PC-3 (cell line): ENCODE measurements at regions of chr10 and their contacts with region 1.

Region 1: DNA sequence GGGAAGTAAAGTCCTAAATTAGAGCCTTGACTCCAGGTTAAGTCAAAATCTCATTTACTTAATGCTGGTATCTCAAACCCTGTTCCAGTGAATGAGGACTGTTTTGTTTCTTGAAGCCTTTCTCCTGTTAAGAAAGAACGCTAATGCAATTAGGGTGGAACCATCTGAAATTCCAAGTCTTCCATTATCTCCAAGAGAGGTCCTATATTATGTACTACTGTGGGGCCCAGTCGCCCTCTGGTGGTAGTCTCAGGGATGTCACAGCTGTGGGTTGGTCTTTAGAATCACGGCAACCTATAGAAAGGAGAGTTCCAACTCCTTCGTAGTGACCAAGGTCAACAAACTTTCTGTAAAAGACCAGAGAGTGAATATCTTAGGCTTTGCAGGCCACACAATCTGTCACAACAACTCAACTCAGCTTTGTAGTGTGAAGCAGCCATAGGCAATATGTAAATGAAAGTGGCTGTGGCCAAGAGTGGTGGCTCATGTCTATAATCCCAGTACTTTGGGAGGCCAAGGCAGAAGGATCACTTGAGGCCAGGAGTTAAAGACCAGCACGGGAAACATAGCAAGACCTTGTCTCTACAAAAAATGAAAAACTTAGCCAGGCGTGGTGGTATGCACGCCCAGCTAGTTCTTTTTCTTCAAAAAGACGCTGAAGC is 9.3 kb downstream of the RPP38 start:
- DNase-seq: peak; percentile 73
- ATAC-seq: peak; percentile 98
- H3K4me3 ChIP-seq: no peak overlapping the region
- H3K27ac ChIP-seq: no peak overlapping the region
- H3K4me1 ChIP-seq: no peaks in the 10 kb centered on the region
- H3K27me3 ChIP-seq: no peaks in the 10 kb centered on the region
- CTCF ChIP-seq: peak; percentile 75

Region 2: DNA sequence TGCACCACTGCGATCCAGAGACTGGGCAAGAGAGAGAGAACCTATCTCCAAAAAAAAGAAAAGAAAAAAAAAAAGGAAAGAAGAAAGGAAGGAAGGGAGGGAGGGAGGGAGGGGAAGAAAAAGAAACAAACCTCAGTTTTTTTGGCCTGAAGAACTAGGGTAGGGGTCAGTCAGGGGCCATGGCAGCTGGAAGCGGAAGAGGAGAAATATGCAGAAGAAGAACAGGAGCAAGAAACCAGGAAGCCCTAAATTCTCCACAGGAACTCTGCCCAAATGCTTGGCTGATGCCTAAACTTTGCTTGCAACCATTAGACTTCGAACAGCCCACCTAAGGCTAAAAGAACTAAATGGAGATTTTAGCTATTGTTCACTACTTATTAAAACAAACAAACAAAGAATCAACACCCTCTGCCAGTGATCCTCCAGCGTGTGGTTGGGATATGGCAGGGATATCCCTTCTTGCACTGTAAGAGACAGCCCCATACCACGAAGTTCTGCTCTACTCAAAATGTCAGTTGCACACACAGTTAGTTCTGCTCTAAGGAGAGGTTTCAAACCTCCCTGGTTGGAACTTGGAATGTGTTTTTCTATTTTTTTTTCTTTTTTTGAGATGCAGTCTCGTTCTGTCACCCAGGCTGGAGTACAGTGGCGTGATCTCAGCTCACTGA is 471.3 kb before region 1 on chr10:
- CTCF ChIA-PET with region 1: no interaction called
- POLR2A ChIA-PET with region 1: no interaction called
- intact Hi-C with region 1: no loop called
- DNase-seq: no peak
- ATAC-seq: no peak
- H3K4me3 ChIP-seq: no peak overlapping the region
- H3K27ac ChIP-seq: no peak overlapping the region
- H3K4me1 ChIP-seq: no peaks in the 10 kb centered on the region
- H3K27me3 ChIP-seq: no peaks in the 10 kb centered on the region
- CTCF ChIP-seq: no peak

Region 3: DNA sequence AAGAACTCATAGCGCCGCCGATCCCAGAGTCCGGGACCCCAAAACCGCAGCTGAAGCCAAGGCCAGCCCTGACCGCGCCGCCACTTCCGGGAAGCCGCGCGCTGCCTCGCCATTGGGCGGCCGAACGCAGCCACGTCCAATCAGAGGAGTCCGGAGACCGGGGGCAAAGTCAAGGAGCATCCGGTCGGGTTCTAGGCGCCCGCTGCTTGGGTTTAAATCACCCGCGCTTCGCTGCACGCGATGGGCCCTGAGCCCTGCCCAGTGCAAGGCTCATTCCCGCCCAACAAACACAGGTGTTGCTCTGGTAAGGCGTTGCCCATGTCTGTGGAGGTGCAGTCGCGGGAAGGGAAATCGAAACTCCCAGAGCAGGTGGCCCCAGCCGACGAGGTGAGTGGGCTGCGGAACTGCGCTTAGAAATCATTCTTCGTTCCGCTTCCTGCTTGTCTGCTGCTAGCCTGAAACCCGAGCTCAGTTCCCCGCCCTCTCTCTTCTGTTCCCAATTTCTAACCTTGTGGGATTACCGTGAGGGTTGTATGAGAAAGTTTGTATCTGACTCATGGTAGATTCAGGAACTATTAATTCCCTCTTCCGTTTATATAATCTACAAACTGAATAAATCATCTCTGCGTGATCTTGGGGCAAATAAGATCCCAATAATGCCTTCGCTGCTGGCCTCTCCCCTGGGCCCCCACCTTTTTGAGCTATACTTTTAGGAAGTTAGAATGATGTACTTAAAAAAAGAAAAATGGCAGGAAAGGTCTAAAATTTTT is 152.3 kb before region 1 on chr10 and contains the start of gene DCLRE1C:
- CTCF ChIA-PET with region 1: no interaction called
- POLR2A ChIA-PET with region 1: no interaction called
- intact Hi-C with region 1: no loop called
- DNase-seq: peak; percentile 82
- ATAC-seq: peak; percentile 89
- H3K4me3 ChIP-seq: peak within 1 kb of the TSS; percentile 72
- H3K27ac ChIP-seq: peak within 1 kb of the TSS; percentile 97
- H3K4me1 ChIP-seq: peaks cover 13% of the 10 kb centered on the region
- H3K27me3 ChIP-seq: no peaks in the 10 kb centered on the region
- CTCF ChIP-seq: no peak
- total RNA-seq, gene DCLRE1C: 3.7 and 9.8 TPM in 2 replicates

Region 4: GRCh38 chr10:14995964-14996565 is 110.4 kb before region 1 on chr10:
- CTCF ChIA-PET with region 1: no interaction called
- POLR2A ChIA-PET with region 1: no interaction called
- intact Hi-C with region 1: loop called (anchors 1 kb)
- DNase-seq: no peak
- ATAC-seq: no peak
- H3K4me3 ChIP-seq: no peak overlapping the region
- H3K27ac ChIP-seq: no peak overlapping the region
- H3K4me1 ChIP-seq: no peaks in the 10 kb centered on the region
- H3K27me3 ChIP-seq: no peaks in the 10 kb centered on the region
- CTCF ChIP-seq: no peak